ENCODE measurements at regions of chr17 and their contacts with region 1.

Region 1: GRCh38 chr17:29369831-29370735 is 20.1 kb upstream of the TAOK1 start:
- DNase-seq: peak; percentile 25 to 80 (median 67)
- ATAC-seq: peak; percentile 95
- H3K4me3 ChIP-seq: no peak overlapping the region
- H3K4me3 Mint-ChIP-seq: no peak overlapping the region
- H3K27ac ChIP-seq: peak overlapping the region; percentile 63
- H3K27ac Mint-ChIP-seq: no peak overlapping the region
- H3K4me1 ChIP-seq: no peaks in the 10 kb centered on the region
- H3K4me1 Mint-ChIP-seq: no peaks in the 10 kb centered on the region
- H3K27me3 ChIP-seq: no peaks in the 10 kb centered on the region
- H3K27me3 Mint-ChIP-seq: peaks cover 0 to 2% (median 0%) of the 10 kb centered on the region in 5 donors

Region 2: GRCh38 chr17:29389982-29390850 is 20.1 kb after region 1 on chr17 and contains the start of gene TAOK1:
- CTCF ChIA-PET with region 1: interaction called, 8 read pairs
- POLR2A ChIA-PET with region 1: interaction called, 4 read pairs
- intact Hi-C with region 1: loop called in 1 of 2 experiments (anchors 1 kb)
- DNase-seq: peak; percentile 93 to 98 (median 96)
- ATAC-seq: peak; percentile 97
- H3K4me3 ChIP-seq: peak within 1 kb of the TSS; percentile 94
- H3K4me3 Mint-ChIP-seq: peak within 1 kb of the TSS; percentile 95 to 99 (median 98)
- H3K27ac ChIP-seq: peak within 1 kb of the TSS; percentile 98
- H3K27ac Mint-ChIP-seq: peak within 1 kb of the TSS; percentile 92 to 98 (median 97)
- H3K4me1 ChIP-seq: peaks cover 14 to 25% of the 10 kb centered on the region in 2 donors
- H3K4me1 Mint-ChIP-seq: peaks cover 36 to 49% (median 44%) of the 10 kb centered on the region in 7 donors
- H3K27me3 ChIP-seq: no peaks in the 10 kb centered on the region
- H3K27me3 Mint-ChIP-seq: peaks cover 0 to 2% (median 0%) of the 10 kb centered on the region in 5 donors
- total RNA-seq, gene TAOK1: 62.4 to 70.1 (median 66.5) TPM

Region 3: DNA sequence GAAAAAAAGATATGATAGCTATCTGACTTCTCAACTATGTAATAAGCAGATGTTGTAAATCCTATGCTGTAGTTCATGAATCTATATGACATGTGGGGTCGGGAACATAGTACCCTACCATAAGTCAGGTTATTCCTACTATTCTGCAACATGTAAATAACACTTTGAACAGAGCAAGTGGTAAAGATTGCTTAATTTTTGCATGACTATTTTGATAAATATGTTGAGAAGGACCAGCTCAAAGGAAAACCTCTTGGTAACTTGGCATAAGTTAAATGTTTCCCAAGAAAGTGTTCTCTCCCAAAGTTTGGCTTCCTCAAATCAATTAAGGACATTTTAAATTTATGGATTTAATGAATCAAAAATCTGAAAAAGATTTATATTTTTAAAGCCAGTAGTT is 134.6 kb after region 1 on chr17:
- CTCF ChIA-PET with region 1: no interaction called
- POLR2A ChIA-PET with region 1: no interaction called
- intact Hi-C with region 1: no loop called
- DNase-seq: no peak
- ATAC-seq: no peak
- H3K4me3 ChIP-seq: no peak overlapping the region
- H3K4me3 Mint-ChIP-seq: no peak overlapping the region
- H3K27ac ChIP-seq: no peak overlapping the region
- H3K27ac Mint-ChIP-seq: no peak overlapping the region
- H3K4me1 ChIP-seq: no peaks in the 10 kb centered on the region
- H3K4me1 Mint-ChIP-seq: peaks cover 0 to 3% (median 0%) of the 10 kb centered on the region in 7 donors
- H3K27me3 ChIP-seq: no peaks in the 10 kb centered on the region
- H3K27me3 Mint-ChIP-seq: no peaks in the 10 kb centered on the region

Region 4: DNA sequence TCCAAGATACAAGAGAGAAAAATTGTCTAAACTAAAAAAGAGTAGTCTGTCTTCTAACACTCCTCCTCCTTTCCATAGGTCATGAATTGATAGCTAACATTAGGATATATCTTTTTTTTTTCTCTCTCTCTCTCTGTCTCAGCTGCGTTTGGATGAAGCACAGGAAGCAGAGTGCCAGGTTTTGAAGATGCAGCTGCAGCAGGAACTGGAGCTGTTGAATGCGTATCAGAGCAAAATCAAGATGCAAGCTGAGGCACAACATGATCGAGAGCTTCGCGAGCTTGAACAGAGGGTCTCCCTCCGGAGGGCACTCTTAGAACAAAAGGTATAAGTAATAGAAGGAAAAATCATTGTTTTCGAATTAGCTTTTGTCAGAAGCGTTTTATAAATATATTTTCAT is 163.9 kb after region 1 on chr17:
- CTCF ChIA-PET with region 1: interaction called, 45 read pairs
- POLR2A ChIA-PET with region 1: interaction called, 6 read pairs
- intact Hi-C with region 1: loop called (anchors 1 kb)
- DNase-seq: no peak
- ATAC-seq: no peak
- H3K4me3 ChIP-seq: no peak overlapping the region
- H3K4me3 Mint-ChIP-seq: no peak overlapping the region
- H3K27ac ChIP-seq: no peak overlapping the region
- H3K27ac Mint-ChIP-seq: peak overlapping the region in 2 of 9 donors; percentile 14 to 36
- H3K4me1 ChIP-seq: no peaks in the 10 kb centered on the region
- H3K4me1 Mint-ChIP-seq: no peaks in the 10 kb centered on the region
- H3K27me3 ChIP-seq: no peaks in the 10 kb centered on the region
- H3K27me3 Mint-ChIP-seq: no peaks in the 10 kb centered on the region

Region 5: DNA sequence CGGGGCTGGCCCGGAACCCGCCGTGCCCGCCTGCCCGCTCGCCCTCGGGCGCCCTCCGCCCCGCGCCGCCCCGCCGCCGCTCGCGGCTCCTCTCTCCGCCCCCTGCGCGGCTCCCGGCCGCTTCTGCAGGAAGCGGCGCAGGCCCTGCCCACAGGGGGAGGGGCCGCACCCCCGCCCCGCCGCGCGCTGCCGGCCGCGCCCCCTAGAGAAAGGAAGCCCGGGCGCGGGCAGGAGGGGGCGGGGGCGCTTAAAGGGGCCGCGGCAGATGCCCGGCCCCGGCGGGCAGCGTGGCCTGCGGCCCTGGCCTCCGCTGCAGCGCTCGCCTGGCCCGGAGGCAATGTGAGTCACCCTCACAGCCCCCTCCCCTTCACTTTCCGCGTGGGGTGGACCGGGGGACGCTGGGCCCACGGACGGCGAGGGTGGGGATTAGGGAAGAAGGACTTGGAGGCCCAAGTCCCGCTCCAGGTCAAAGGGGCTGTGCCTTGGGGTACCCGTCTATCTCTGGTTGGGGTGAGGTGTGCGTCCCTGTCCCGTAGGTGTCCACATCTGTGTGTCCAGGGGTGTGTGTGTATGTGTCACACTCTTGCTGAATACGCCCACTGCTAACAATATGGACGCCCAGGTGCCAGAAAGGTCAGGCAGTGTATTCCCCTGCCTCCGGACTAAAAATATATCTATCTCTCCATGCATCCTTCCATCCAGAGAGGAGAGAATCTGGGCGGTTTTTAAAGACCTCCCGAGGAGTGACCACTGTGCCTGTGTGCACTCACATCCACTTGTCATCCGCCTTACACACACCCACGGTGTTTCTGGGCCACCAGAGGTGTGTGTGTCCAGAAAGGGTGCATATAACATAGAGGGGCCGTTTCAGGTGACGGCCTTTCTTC is 219.7 kb after region 1 on chr17 and contains the start of gene GIT1:
- CTCF ChIA-PET with region 1: interaction called, 7 read pairs
- POLR2A ChIA-PET with region 1: no interaction called
- intact Hi-C with region 1: loop called in 1 of 2 experiments (anchors 5 kb)
- DNase-seq: peak; percentile 77 to 88 (median 84)
- ATAC-seq: peak; percentile 93
- H3K4me3 ChIP-seq: peak within 1 kb of the TSS; percentile 72
- H3K4me3 Mint-ChIP-seq: peak within 1 kb of the TSS; percentile 88 to 96 (median 94)
- H3K27ac ChIP-seq: peak within 1 kb of the TSS; percentile 75
- H3K27ac Mint-ChIP-seq: peak within 1 kb of the TSS; percentile 78 to 94 (median 89)
- H3K4me1 ChIP-seq: peaks cover 58 to 65% of the 10 kb centered on the region in 2 donors
- H3K4me1 Mint-ChIP-seq: peaks cover 35 to 73% (median 66%) of the 10 kb centered on the region in 7 donors
- H3K27me3 ChIP-seq: no peaks in the 10 kb centered on the region
- H3K27me3 Mint-ChIP-seq: no peaks in the 10 kb centered on the region
- total RNA-seq, gene GIT1: 42.5 to 76.3 (median 62.4) TPM

Measured in naive thymus-derived CD4-positive, alpha-beta T cell (primary cell).